ENCODE measurements at regions of chr12 and their contacts with region 1.

Region 1: GRCh38 chr12:49322708-49323523 is at the start of gene TROAP:
- DNase-seq: peak; percentile 99
- ATAC-seq: peak; percentile 96
- H3K4me3 Mint-ChIP-seq: peak within 1 kb of the TSS; percentile 95
- H3K27ac Mint-ChIP-seq: peak within 1 kb of the TSS; percentile 95
- H3K4me1 Mint-ChIP-seq: peaks cover 10% of the 10 kb centered on the region
- H3K27me3 Mint-ChIP-seq: no peaks in the 10 kb centered on the region
- total RNA-seq, gene TROAP: 64.5 to 84.3 TPM

Region 2: DNA sequence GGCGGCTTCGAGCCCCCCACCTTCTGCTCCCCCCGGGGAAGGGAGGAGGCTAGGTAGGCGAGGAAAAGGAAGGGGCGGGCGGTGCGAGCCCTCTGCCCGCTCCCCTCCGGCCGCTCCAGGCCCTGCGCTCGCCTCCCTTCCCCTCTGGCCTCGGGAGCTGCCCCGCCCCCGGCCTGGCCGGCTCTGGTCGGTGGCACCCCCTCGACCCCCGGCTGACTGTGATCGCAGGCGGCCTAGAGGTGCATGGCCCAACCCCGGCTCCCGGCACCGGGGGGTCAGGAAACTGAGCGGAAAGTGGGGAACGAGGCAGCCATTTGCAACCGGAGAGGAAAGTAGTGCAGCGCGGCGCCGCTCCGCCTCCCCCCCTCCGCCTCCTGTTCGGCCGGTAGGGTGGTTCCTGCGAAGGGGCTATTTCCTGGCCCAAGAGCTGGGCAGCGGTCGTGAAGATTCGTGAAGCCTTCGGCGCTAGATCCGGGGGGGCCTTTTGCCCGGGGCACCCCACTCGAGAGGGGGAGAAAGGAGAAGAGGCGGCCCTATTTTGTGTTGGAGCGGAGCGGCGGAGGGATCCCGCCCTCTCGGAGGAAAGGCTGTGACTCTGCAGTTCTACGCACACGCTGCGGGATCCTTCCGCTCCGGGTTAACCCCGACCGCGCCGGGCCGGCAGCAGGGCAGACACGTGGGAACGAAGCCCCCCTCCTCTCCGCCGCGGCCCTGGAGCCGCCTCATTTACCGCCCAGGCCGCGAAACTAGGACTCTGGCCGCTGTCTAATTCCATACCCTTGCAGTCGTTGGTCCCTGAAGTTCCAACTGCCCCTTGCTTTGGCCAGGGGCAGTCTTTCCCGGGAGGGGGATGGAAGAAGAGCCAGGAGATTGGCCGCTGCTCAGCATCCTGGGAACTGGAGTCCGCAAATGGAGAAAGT is 262.4 kb before region 1 on chr12 and contains the start of gene KMT2D:
- CTCF ChIA-PET with region 1: interaction called, 4 read pairs
- POLR2A ChIA-PET with region 1: no interaction called
- intact Hi-C with region 1: loop called in 1 of 2 experiments (anchors 5 kb)
- DNase-seq: peak; percentile 94
- ATAC-seq: peak; percentile 75
- H3K4me3 Mint-ChIP-seq: peak within 1 kb of the TSS; percentile 98
- H3K27ac Mint-ChIP-seq: peak within 1 kb of the TSS; percentile 95
- H3K4me1 Mint-ChIP-seq: peaks cover 45% of the 10 kb centered on the region
- H3K27me3 Mint-ChIP-seq: no peaks in the 10 kb centered on the region
- total RNA-seq, gene KMT2D: 48.3 to 58.2 TPM

Region 3: DNA sequence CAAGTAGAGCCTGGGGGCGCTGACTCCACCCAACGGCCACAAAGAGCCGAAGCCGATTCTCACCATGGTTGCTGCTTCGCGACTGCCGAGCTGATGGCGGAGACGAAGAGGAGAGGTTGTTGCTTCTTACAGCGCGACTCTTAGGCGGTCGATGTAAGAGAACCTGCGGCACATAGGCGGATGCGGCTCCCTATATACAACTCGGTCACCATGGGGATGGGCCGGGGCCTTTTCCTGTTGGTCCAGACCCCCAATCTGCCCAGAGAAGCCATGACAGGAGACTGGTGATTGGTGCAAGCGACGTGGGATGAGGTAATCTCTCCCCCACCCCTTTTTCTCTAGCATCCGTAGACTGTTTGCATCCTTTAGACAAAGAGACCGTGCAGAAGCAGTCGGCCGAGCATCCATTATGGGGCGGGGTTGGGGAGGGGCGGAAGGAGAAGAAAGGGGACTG is 134.0 kb before region 1 on chr12 and contains the start of gene TUBA1A:
- CTCF ChIA-PET with region 1: no interaction called
- POLR2A ChIA-PET with region 1: interaction called, 4 read pairs
- intact Hi-C with region 1: loop called in 1 of 2 experiments (anchors 1 kb)
- DNase-seq: peak; percentile 97
- ATAC-seq: peak; percentile 95
- H3K4me3 Mint-ChIP-seq: peak within 1 kb of the TSS; percentile 92
- H3K27ac Mint-ChIP-seq: peak within 1 kb of the TSS; percentile 92
- H3K4me1 Mint-ChIP-seq: peaks cover 24% of the 10 kb centered on the region
- H3K27me3 Mint-ChIP-seq: no peaks in the 10 kb centered on the region
- total RNA-seq, gene TUBA1A: 75.7 to 98.5 TPM

Region 4: GRCh38 chr12:49279706-49280159 is 43.2 kb before region 1 on chr12:
- CTCF ChIA-PET with region 1: no interaction called
- POLR2A ChIA-PET with region 1: no interaction called
- intact Hi-C with region 1: no loop called
- DNase-seq: no peak
- ATAC-seq: no peak
- H3K4me3 Mint-ChIP-seq: no peak overlapping the region
- H3K27ac Mint-ChIP-seq: no peak overlapping the region
- H3K4me1 Mint-ChIP-seq: no peaks in the 10 kb centered on the region
- H3K27me3 Mint-ChIP-seq: peaks cover 5% of the 10 kb centered on the region

Region 5: DNA sequence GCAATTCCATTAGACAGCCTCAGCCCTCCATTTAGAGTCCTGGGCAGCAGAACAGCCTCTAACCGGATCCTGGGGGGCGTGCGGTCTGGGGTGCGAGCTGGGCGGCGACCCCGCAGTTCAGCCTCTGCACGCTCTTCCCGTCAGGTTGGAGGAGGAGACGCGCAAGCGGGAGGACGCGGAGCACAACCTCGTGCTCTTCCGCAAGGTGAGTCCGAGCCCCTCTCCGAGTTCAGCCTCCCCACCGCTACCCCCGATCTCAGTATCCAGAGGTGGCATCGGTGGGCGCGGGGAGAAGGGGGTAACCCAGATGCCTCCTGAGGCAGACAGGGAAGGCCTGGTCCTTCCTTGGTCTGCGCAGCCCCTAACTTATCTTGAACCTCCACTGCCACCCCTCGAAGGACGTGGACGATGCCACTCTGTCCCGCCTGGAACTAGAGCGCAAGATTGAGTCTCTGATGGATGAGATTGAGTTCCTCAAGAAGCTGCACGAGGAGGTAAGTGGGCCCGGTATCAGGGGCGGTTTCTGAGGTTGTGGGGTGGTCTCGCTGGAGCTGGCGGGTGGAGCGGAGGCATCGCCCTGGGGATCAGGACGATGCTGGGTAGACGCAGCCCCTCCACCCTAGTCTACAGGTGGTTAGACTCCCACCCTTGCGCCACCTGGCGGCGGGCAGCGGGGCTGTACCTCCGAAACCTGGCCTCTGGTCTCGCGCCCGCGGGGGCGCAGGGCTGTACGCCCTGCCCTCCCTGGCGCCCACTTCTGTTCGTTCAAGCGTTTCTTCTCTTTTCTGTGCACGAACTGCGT is 26.7 kb before region 1 on chr12:
- CTCF ChIA-PET with region 1: interaction called, 23 read pairs
- POLR2A ChIA-PET with region 1: interaction called, 4 read pairs
- intact Hi-C with region 1: no loop called
- DNase-seq: peak; percentile 82
- ATAC-seq: peak; percentile 80
- H3K4me3 Mint-ChIP-seq: peak overlapping the region; percentile 53
- H3K27ac Mint-ChIP-seq: no peak overlapping the region
- H3K4me1 Mint-ChIP-seq: peaks cover 12% of the 10 kb centered on the region
- H3K27me3 Mint-ChIP-seq: peaks cover 46% of the 10 kb centered on the region

Region 6: GRCh38 chr12:49366652-49367380 is 43.9 kb after region 1 on chr12:
- CTCF ChIA-PET with region 1: interaction called, 5 read pairs
- POLR2A ChIA-PET with region 1: interaction called, 10 read pairs
- intact Hi-C with region 1: loop called in 1 of 2 experiments (anchors 1 kb)
- DNase-seq: peak; percentile 94
- ATAC-seq: peak; percentile 86
- H3K4me3 Mint-ChIP-seq: peak overlapping the region; percentile 97
- H3K27ac Mint-ChIP-seq: peak overlapping the region; percentile 99
- H3K4me1 Mint-ChIP-seq: peaks cover 25% of the 10 kb centered on the region
- H3K27me3 Mint-ChIP-seq: no peaks in the 10 kb centered on the region

Region 7: DNA sequence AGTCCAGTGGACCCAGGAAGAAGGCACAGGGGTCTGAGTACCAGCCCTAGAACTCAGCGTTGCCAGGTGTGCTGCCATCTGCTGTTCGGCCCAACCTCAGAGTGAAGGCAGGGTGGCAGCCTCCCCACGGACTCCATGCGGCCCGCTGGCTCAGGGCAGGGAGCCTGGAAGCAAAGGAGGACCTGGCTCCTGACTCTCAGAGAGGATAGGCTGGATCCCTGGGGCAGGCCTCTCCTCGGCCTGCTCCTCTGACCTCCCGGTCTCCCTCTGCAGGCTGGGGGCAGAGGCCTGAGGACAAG is 234.9 kb after region 1 on chr12:
- CTCF ChIA-PET with region 1: no interaction called
- POLR2A ChIA-PET with region 1: no interaction called
- intact Hi-C with region 1: no loop called
- DNase-seq: no peak
- ATAC-seq: no peak
- H3K4me3 Mint-ChIP-seq: no peak overlapping the region
- H3K27ac Mint-ChIP-seq: no peak overlapping the region
- H3K4me1 Mint-ChIP-seq: peaks cover 5% of the 10 kb centered on the region
- H3K27me3 Mint-ChIP-seq: no peaks in the 10 kb centered on the region

Region 8: DNA sequence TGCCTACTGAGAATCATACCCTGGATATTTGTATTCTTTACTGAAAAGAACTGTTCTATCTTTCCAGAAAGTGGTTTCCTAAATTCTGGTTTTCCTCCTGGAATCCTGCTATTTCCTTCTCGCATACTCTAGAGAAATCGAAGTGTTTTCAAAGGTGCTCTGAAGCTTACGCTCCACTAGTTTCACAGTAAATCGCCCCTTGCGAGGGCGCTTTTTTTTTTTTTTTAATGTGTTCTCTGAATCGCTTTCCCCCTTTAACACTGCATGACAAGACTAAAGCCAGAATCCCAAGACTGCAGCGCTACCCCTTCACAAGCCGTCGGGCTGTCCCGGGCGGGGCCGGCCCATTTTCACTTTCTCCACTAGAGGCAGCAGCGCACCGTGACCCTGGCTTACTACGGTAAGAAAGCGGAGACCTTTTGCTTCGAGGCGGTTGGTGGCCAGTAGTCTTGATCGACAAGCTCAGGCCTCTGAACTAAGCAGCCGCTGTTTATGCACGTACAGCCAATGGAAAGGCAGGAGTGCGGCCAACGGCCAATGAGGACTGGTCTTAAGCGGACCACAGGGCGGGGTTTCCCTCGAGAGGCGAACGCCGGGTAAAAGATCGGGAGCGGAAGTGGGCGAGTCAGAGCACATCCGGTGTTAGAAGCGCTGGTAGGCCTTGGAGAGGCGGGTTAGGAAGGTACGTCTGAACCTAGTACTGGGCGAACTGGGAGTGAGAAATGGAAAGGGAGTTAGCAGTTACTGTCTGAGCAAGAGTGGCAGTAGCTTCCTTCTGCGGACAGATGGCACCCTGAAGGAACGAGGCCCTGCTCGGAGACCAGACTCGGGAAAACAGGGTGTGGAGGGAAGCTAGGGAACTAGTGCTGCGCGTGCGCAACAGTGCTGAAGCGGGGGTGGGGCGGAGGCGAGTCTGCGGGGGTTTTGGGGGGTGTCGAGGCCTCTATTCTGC is 418.3 kb after region 1 on chr12 and contains the start of gene TMBIM6:
- CTCF ChIA-PET with region 1: no interaction called
- POLR2A ChIA-PET with region 1: no interaction called
- intact Hi-C with region 1: loop called in 1 of 2 experiments (anchors 2 kb)
- DNase-seq: peak; percentile 99
- ATAC-seq: peak; percentile 93
- H3K4me3 Mint-ChIP-seq: peak within 1 kb of the TSS; percentile 89
- H3K27ac Mint-ChIP-seq: peak within 1 kb of the TSS; percentile 100
- H3K4me1 Mint-ChIP-seq: peaks cover 45% of the 10 kb centered on the region
- H3K27me3 Mint-ChIP-seq: no peaks in the 10 kb centered on the region
- total RNA-seq, gene TMBIM6: 378 to 450 TPM

Region 9: GRCh38 chr12:50477241-50477832 is 1154.4 kb after region 1 on chr12:
- CTCF ChIA-PET with region 1: no interaction called
- POLR2A ChIA-PET with region 1: no interaction called
- intact Hi-C with region 1: no loop called
- DNase-seq: no peak
- ATAC-seq: no peak
- H3K4me3 Mint-ChIP-seq: no peak overlapping the region
- H3K27ac Mint-ChIP-seq: no peak overlapping the region
- H3K4me1 Mint-ChIP-seq: no peaks in the 10 kb centered on the region
- H3K27me3 Mint-ChIP-seq: no peaks in the 10 kb centered on the region

Measured in activated CD4-positive, alpha-beta T cell treated with anti-CD3 and anti-CD28 coated beads for 36 hours (primary cell).